CD8-positive, alpha-beta T cell (primary cell): ENCODE measurements at regions of chr7 and their contacts with region 1.

Region 1: DNA sequence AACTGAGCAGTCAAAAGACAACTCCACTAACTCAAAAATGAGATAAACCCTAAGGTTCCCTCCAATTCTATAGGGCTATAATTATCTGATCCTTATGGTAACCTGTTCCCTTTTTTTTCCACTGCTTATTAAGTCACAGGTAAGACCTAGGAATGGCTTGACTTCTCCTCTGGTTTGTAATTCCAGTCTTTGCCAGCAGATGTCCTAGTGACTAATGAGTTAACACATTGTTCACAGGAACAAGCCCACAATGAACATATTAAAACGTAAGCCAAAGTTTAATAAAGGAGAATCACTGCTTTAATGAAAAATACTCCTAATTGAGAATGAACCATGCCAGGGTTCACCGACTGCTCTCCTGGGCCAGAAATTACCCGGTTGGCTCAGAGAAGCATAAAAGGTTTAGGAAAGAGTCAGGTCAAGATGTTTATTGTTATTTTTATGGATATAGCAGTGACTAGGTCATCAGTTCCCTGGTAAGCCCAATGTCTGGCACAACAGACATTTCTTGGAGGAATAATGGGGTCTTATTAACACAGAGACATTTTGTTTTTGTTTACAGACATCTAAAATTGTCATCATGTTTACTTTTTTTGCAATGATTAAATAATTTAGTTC is 120.1 kb downstream of the ELAPOR2 start:
- DNase-seq: peak in 5 of 9 experiments; percentile 4 to 67 (median 39)
- ATAC-seq: peak; percentile 63
- H3K4me3 ChIP-seq: no peak overlapping the region
- H3K4me3 Mint-ChIP-seq: no peak overlapping the region
- H3K27ac ChIP-seq: no peak overlapping the region
- H3K27ac Mint-ChIP-seq: no peak overlapping the region
- H3K4me1 ChIP-seq: no peaks in the 10 kb centered on the region
- H3K4me1 Mint-ChIP-seq: no peaks in the 10 kb centered on the region
- H3K27me3 ChIP-seq: no peaks in the 10 kb centered on the region
- H3K27me3 Mint-ChIP-seq: peaks cover 8% of the 10 kb centered on the region
- CTCF ChIP-seq: peak; percentile 41

Region 2: DNA sequence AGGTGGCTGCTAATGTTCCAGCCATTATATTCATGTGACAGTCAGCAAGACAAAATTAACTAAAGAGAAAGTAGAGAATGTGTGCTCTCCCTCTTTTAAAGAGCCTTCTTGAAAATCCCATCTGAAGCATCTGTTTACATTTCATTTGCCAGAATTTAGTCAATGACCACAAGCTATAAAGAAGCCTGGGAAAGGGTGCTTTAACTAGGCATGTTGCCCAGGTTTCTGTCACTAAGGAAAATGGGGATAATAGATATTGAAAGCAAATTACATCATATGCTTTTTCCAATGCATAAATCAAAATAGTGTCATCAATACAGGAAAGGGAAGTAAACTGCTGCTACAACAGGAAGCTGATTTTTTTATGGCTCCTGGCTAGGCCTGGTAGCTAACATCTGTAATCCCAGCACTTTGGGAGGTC is 52.5 kb after region 1 on chr7:
- CTCF ChIA-PET with region 1: no interaction called
- POLR2A ChIA-PET with region 1: no interaction called
- intact Hi-C with region 1: loop called in 1 of 2 experiments (anchors 2 kb)
- DNase-seq: no peak
- ATAC-seq: no peak
- H3K4me3 ChIP-seq: no peak overlapping the region
- H3K4me3 Mint-ChIP-seq: no peak overlapping the region
- H3K27ac ChIP-seq: no peak overlapping the region
- H3K27ac Mint-ChIP-seq: no peak overlapping the region
- H3K4me1 ChIP-seq: no peaks in the 10 kb centered on the region
- H3K4me1 Mint-ChIP-seq: peaks cover 5% of the 10 kb centered on the region
- H3K27me3 ChIP-seq: no peaks in the 10 kb centered on the region
- H3K27me3 Mint-ChIP-seq: peaks cover 8% of the 10 kb centered on the region
- CTCF ChIP-seq: no peak

Region 3: DNA sequence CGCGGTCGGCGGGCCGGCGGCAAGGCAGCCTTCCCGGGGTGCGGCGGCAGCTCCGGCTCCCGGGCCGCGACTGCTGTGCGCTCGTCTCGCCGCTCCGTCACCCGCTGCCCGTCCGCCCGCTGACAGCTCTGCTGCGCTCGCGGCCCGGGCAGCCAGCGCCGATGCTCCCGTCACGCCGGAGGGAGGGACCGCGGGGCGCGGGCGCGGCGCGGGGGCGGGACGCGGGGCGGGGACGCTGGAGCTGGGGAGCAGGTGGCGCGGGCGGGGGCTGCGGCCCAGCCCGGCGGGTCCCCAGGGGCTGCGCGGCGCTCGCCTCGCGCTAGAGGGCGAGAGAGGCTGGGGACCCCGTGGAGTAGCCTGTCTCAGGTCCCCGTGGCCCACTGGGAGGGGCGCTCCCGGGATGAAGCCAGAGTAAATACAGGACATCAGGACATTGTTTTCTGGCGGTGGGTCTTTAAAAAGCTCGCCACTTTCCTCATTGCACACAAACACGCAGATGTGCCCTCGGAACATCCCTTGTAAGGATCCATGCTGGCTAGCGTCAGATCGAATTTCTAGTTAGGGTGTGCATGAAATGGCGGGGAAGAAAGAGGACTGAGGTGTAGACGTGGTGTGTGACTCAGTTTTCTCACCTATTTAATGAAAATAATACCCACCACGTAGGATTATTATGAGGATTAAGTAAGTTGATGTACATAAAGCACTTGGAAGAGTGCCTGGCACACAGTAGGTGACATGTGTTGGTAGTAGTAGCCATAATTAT is 120.4 kb after region 1 on chr7 and contains the start of gene ELAPOR2:
- CTCF ChIA-PET with region 1: interaction called, 3 read pairs
- POLR2A ChIA-PET with region 1: no interaction called
- intact Hi-C with region 1: loop called in 1 of 2 experiments (anchors 2 kb)
- DNase-seq: peak; percentile 64 to 89 (median 80)
- ATAC-seq: peak; percentile 94
- H3K4me3 ChIP-seq: peak within 1 kb of the TSS; percentile 43 to 62
- H3K4me3 Mint-ChIP-seq: peak within 1 kb of the TSS; percentile 87
- H3K27ac ChIP-seq: peak within 1 kb of the TSS; percentile 16 to 38
- H3K27ac Mint-ChIP-seq: peak within 1 kb of the TSS; percentile 77
- H3K4me1 ChIP-seq: peaks cover 10% of the 10 kb centered on the region
- H3K4me1 Mint-ChIP-seq: peaks cover 16% of the 10 kb centered on the region
- H3K27me3 ChIP-seq: no peaks in the 10 kb centered on the region
- H3K27me3 Mint-ChIP-seq: peaks cover 5% of the 10 kb centered on the region
- CTCF ChIP-seq: no peak
- total RNA-seq, gene ELAPOR2: 5.1 to 5.7 TPM